ENCODE measurements at regions of chr6 and their contacts with region 1.

Region 1: GRCh38 chr6:112010328-112010727 is 43.6 kb upstream of the CCN6 start:
- DNase-seq: no peak
- ATAC-seq: peak; percentile 61
- H3K4me3 Mint-ChIP-seq: no peak overlapping the region
- H3K27ac Mint-ChIP-seq: no peak overlapping the region
- H3K4me1 Mint-ChIP-seq: peaks cover 5% of the 10 kb centered on the region
- H3K27me3 Mint-ChIP-seq: no peaks in the 10 kb centered on the region

Region 2: DNA sequence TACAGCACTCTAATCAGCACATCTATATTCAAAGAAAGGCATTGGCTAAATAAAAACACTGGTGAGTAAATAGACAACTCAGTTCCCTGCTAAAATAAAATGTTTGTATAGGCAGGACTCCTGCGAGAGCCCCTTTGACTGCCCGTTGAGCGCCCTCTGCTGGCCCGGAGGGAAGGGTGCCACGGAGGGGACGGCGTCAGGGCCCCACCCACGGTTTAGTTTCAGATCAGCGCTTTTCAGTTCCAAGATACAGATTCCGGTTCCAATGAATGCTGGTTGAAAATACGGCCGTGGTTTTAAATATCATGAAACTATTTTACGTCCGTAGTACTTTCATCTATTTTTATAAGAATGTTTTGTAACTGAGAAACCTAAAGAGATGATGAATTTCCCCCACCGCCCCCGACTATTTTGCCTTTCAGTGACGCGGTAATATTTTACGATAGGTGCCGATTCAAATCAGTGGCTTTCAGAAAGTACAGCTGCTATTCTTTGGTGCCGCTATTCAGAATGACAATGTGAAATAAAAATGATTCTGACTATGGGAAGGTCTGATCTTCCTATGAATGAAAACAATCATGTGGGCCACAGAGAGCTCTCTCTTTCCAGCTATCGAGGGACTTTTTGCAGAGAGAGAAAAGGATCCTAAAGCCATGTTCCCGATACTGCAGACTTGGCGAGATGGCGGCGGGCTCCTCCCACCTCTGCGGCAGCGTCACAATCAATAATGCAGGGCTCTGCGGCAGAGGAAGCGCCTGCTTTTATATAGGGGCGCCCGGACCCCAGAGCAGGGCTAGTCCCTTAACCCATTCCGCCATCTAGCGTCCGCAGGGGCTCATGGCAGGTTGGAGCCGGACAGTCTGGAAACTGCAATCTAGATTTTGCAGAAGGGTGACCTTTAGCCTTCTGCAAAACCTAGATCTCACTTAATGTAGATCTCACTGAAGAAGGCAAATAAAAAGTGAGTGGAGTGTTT is 33.0 kb after region 1 on chr6:
- POLR2A ChIA-PET with region 1: interaction called, 12 read pairs
- DNase-seq: peak; percentile 91
- ATAC-seq: peak; percentile 98
- H3K4me3 Mint-ChIP-seq: peak overlapping the region; percentile 97
- H3K27ac Mint-ChIP-seq: peak overlapping the region; percentile 99
- H3K4me1 Mint-ChIP-seq: peaks cover 13% of the 10 kb centered on the region
- H3K27me3 Mint-ChIP-seq: no peaks in the 10 kb centered on the region

Region 3: DNA sequence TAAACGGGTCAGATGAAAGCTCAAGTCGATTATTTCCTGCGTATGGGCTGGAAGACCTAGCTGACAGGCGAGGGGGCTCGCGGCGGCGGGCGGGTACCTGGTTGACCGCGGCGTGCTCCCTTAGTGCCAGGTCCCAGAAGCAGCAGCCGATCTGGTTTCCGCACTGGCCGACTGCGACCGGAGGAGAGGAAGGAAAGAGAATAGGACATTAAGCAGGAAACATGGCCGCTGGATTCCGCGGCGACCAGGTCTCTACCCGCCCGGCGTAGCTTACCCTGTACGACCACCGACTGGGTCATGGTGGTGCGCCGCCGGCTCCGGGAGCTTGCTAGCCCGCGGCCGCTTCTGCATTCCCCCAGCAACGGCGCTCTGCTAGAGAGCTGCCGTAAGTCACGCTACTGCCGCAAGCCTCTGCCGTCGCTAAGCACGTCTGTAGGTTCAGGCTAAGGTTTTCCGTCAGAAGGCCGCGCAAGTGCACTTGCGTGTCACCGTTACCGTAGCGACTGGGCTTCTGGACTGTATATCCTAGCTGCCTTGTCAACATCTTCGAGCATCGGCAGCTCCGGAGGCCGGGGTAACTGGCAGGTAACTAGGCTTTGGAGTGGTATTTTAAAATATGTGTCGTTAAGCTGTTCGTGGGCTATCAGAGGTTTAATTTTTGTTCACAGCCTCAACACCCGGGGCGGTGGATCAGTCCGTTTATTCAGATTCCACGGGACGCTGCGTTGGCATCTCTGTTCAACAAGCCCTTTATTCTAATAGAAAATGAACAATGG is 77.0 kb after region 1 on chr6 and contains the starts of genes FAM229B and TUBE1:
- POLR2A ChIA-PET with region 1: no interaction called
- DNase-seq: peak; percentile 85
- ATAC-seq: peak; percentile 97
- H3K4me3 Mint-ChIP-seq: no peak within 1 kb of the TSS
- H3K27ac Mint-ChIP-seq: no peak within 1 kb of the TSS
- H3K4me1 Mint-ChIP-seq: peaks cover 3% of the 10 kb centered on the region
- H3K27me3 Mint-ChIP-seq: peaks cover 28% of the 10 kb centered on the region
- total RNA-seq, gene FAM229B: 1.9 to 2.3 TPM
- total RNA-seq, gene TUBE1: 27.6 to 28.2 TPM

Region 4: GRCh38 chr6:112109262-112109661 is 98.9 kb after region 1 on chr6:
- POLR2A ChIA-PET with region 1: no interaction called
- DNase-seq: no peak
- ATAC-seq: no peak
- H3K4me3 Mint-ChIP-seq: no peak overlapping the region
- H3K27ac Mint-ChIP-seq: no peak overlapping the region
- H3K4me1 Mint-ChIP-seq: no peaks in the 10 kb centered on the region
- H3K27me3 Mint-ChIP-seq: peaks cover 22% of the 10 kb centered on the region

Measured in activated naive CD8-positive, alpha-beta T cell treated with anti-CD3 and anti-CD28 coated beads, Interleukin-2, amount 10 ng/mL, durations not matched to agents 7 days and 5 days (primary cell).